ENCODE measurements at regions of chr19 and their contacts with region 1.

Region 1: GRCh38 chr19:36665832-36666231 is 805 bp downstream of the ZNF461 start:
- DNase-seq: no peak
- ATAC-seq: no peak
- H3K4me3 Mint-ChIP-seq: peak overlapping the region; percentile 97 to 100 (median 99)
- H3K27ac Mint-ChIP-seq: peak overlapping the region in 8 of 10 donors; percentile 11 to 98 (median 88)
- H3K4me1 Mint-ChIP-seq: peaks cover 22 to 34% (median 31%) of the 10 kb centered on the region in 4 donors
- H3K27me3 Mint-ChIP-seq: no peaks in the 10 kb centered on the region

Region 2: DNA sequence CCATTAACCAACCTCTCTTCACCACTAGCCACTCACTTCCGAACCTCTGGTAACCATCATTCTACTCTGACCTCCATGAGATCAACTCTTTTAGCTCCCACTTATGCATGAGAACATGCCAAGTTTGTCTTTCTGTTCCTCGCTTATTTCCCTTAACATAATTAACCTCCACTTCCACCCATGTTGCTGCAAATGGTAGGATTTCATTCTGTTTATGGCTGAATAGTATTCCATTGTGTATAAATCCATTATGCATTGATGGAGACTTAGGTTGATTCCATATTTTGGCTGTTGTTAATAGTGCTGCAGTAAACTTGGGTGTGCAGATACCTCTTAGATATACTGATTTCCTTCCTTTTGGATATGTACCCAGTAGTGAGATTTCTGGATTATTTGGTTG is 30.5 kb before region 1 on chr19:
- POLR2A ChIA-PET with region 1: no interaction called
- DNase-seq: no peak
- ATAC-seq: no peak
- H3K4me3 Mint-ChIP-seq: peak overlapping the region in 1 of 10 donors; percentile 6
- H3K27ac Mint-ChIP-seq: no peak overlapping the region
- H3K4me1 Mint-ChIP-seq: no peaks in the 10 kb centered on the region
- H3K27me3 Mint-ChIP-seq: no peaks in the 10 kb centered on the region

Region 3: GRCh38 chr19:36687214-36688056 is 21.6 kb after region 1 on chr19 and contains the start of gene ZNF567:
- POLR2A ChIA-PET with region 1: interaction called, 10 read pairs
- DNase-seq: peak; percentile 92 to 98 (median 95)
- ATAC-seq: peak; percentile 88 to 92
- H3K4me3 Mint-ChIP-seq: peak within 1 kb of the TSS; percentile 98 to 100 (median 99)
- H3K27ac Mint-ChIP-seq: peak within 1 kb of the TSS; percentile 94 to 98 (median 96)
- H3K4me1 Mint-ChIP-seq: peaks cover 24 to 46% (median 40%) of the 10 kb centered on the region in 4 donors
- H3K27me3 Mint-ChIP-seq: no peaks in the 10 kb centered on the region
- polyA plus RNA-seq, gene ZNF567: 6.3 to 11.0 (median 9.6) TPM

Measured in naive thymus-derived CD8-positive, alpha-beta T cell (primary cell).